ENCODE measurements at regions of chr12 and their contacts with region 1.

Region 1: DNA sequence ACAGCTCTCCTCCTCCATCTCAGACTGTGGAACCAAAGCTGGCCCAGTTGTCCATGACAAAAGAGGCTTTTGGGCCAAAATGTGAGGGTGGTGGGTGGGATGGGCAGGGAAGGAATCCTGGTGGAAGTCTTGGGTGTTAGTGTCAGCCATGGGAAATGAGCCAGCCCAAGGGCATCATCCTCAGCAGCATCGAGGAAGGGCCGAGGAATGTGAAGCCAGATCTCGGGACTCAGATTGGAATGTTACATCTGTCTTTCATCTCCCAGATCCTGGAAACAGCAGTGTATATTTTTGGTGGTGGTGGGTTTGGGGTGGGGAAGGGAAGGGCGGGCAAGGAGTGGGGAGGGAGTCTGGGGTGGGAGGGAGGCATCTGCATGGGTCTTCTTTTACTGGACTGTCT is 11.8 kb upstream of the TAMALIN start:
- DNase-seq: no peak
- H3K4me3 ChIP-seq: no peak overlapping the region
- CTCF ChIP-seq: no peak

Region 2: GRCh38 chr12:51886021-51886322 is 109.0 kb before region 1 on chr12:
- CTCF ChIA-PET with region 1: interaction called, 10 read pairs
- POLR2A ChIA-PET with region 1: no interaction called
- DNase-seq: peak; percentile 88
- H3K4me3 ChIP-seq: no peak overlapping the region
- CTCF ChIP-seq: no peak

Region 3: DNA sequence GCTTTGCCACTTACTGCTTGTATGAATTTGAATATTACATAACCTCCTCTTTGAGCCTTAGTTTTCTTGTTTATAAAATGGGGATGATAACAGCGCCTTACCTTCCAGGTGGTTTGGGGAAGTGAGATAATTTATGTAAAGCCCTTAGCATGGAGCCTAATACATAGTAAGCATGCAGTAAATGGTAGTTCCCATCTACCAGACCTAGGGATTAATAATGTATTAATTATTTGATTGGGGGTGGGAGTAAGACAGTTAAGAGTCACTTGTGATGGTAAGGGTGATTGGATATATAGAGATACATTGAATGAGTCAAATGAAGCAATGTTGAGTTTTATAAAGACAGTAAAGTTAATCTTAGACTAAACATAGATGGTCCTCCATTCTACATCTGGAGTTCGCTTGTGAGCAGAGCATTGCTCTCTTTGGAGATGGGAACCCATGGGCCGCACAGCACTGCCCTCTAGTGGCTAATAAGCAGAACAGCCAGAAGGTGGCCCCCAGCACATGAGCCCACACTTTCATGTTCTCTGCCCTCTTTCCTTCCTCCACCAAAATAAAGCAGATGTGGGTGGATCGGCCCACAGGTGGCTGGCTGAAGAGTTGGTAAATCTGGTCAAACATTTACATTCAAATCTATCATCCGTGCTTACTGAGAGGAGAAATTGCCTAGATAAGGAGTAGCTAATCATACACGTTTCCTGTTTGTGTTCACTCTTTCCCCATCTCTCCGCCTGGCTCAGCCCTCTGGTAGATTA is 14.7 kb before region 1 on chr12:
- CTCF ChIA-PET with region 1: interaction called, 124 read pairs
- POLR2A ChIA-PET with region 1: no interaction called
- DNase-seq: no peak
- H3K4me3 ChIP-seq: no peak overlapping the region
- CTCF ChIP-seq: peak; percentile 91

Region 4: DNA sequence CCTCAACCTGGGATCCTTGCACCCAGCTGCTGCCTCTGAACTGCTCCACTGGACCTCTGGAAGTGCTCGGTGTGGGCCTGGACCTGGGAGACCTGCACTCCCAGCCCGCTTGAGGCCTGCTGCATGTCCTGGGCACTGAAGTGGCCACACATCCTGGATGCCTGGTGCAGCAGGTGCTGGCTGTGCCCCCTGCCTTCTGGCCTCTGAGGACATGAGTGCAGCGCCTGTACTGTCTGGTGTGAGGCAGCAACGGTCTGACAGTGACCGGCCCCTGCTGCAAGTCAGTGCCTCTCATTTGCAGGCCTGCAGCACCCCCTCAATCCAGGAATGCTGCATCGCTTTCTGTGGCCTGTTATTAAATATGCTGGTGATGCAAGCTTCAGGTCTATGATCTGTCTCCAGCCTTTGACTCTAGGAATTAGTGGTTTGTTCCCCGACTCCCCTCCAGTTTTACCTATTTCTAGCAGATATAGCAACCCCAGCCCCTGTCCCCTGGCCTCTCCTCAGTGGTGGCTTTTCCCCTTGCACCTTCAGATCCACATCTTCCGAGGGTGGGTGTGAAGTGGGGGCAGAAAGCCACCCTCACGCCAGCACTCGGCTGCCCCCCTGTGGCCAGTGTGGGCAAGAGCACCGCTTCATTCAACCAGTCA is 88.2 kb after region 1 on chr12:
- CTCF ChIA-PET with region 1: interaction called, 13 read pairs
- POLR2A ChIA-PET with region 1: no interaction called
- DNase-seq: no peak
- H3K4me3 ChIP-seq: no peak overlapping the region
- CTCF ChIP-seq: peak; percentile 99